Activated naive CD4-positive, alpha-beta T cell treated with anti-CD3 and anti-CD28 coated beads for 36 hours (primary cell): ENCODE measurements at regions of chr17 and their contacts with region 1.

Region 1: DNA sequence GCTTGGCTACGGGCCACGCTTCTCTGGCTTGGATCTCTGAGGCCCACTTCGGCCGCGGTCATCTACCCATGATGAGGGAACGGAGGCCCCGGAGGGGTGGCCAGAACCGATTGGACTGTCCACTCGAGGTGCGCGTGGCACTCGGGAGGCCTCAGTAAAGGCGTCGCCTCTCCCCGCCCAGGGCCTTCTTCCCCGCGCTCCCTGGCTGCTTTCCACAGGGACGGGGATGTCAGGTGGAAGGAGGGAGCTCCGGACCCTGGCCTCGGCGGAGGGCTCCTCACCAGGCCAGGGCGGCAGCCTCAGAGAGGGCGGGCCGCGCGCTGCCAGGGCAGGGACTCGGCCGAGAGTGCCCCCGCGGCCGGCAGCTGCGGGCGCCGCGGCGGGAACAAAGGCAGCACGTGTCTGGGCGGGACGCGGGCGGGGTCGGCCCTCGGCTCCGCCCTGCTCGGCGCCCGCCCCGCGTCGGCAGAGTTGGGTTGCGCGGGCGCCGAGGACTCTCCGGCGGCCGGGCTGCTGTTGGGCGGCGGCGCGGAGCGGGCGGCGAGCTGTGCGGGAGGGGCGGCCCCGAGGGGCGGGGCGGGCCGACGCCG is 587 bp upstream of the CDK5R1 start:
- DNase-seq: peak; percentile 70
- H3K4me3 Mint-ChIP-seq: peak overlapping the region; percentile 45
- H3K27ac Mint-ChIP-seq: no peak overlapping the region
- H3K4me1 Mint-ChIP-seq: peaks cover 47% of the 10 kb centered on the region
- H3K27me3 Mint-ChIP-seq: no peaks in the 10 kb centered on the region

Region 2: DNA sequence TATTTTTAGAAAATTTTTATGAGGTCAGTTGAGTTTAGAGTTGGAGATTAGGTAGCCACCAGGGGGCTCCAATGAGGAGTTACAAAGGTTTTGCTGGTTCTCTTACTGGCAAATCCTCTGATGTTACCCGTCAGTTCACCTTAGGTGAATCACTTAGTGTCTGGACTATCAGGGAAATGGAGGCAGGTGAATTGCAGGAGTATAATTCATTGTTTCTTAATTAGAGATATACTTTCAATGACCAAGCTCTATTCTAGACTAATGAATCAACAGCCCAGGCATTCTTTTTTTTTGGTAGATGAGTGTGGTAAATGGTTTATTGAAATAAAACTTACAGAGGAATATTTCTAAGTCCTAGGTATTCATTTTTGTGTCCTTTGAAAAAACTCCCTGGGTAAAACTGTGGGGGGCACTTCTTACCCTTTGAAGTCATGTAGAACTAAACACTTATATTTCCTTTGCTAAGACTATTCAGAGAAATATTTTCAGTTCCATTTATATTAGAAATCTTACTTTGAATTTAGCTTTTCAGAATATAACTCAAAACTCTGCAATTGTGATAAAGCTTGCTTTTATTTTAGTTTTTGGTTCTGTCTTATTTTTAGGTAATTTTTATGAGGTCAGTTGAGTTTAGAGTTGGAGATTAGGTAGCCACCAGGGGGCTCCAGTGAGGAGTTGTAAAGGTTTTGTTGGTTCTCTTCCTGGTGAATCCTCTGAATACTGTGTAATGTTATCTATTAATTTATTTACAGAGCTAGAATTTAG is 24.2 kb before region 1 on chr17:
- CTCF ChIA-PET with region 1: interaction called, 48 read pairs
- intact Hi-C with region 1: loop called (anchors 1 kb)
- DNase-seq: peak; percentile 83
- H3K4me3 Mint-ChIP-seq: no peak overlapping the region
- H3K27ac Mint-ChIP-seq: peak overlapping the region; percentile 72
- H3K4me1 Mint-ChIP-seq: peaks cover 37% of the 10 kb centered on the region
- H3K27me3 Mint-ChIP-seq: no peaks in the 10 kb centered on the region

Region 3: GRCh38 chr17:32609085-32609484 is 122.9 kb after region 1 on chr17:
- CTCF ChIA-PET with region 1: interaction called, 15 read pairs
- intact Hi-C with region 1: loop called (anchors 1 kb)
- DNase-seq: peak; percentile 89
- H3K4me3 Mint-ChIP-seq: no peak overlapping the region
- H3K27ac Mint-ChIP-seq: no peak overlapping the region
- H3K4me1 Mint-ChIP-seq: peaks cover 8% of the 10 kb centered on the region
- H3K27me3 Mint-ChIP-seq: no peaks in the 10 kb centered on the region

Region 4: DNA sequence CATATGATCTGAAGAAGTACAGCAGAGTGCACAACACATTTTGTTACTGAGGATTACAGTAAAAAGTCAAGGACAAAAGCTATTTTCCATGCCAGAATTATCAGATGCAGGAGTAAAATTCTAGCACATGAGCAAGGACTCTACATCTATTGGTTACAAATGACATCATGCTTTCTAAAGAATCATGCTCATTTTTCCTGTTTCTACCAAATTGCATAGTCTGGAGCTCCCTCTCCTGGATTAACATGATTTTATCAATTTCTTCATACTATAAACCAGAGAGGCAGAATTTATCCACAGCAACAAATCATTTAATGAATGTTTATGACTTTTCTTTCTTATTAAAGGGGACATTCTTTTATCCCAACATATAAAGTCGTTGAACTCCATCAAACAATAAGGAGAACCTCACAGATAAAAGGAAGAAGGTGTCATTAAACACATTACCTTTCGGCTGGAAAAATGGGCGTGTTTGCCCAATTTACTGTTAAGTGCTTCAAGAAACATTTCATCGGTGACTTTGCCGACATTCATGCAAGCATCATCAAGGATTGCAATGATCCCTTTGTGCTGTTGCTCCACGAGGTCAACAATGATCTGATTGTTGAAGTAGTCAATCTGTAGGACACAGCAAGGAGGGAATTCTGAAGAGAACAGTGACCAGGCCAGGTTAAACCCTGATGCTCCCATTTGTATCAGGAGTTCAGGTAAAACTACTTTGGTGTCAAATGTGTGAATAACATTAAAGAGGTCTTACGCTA is 269.0 kb after region 1 on chr17:
- CTCF ChIA-PET with region 1: interaction called, 12 read pairs
- intact Hi-C with region 1: loop called (anchors 1 kb)
- DNase-seq: no peak
- H3K4me3 Mint-ChIP-seq: no peak overlapping the region
- H3K27ac Mint-ChIP-seq: no peak overlapping the region
- H3K4me1 Mint-ChIP-seq: peaks cover 13% of the 10 kb centered on the region
- H3K27me3 Mint-ChIP-seq: no peaks in the 10 kb centered on the region

Region 5: GRCh38 chr17:32936894-32937500 is 450.8 kb after region 1 on chr17:
- CTCF ChIA-PET with region 1: no interaction called
- intact Hi-C with region 1: no loop called
- DNase-seq: peak; percentile 76
- H3K4me3 Mint-ChIP-seq: no peak overlapping the region
- H3K27ac Mint-ChIP-seq: no peak overlapping the region
- H3K4me1 Mint-ChIP-seq: no peaks in the 10 kb centered on the region
- H3K27me3 Mint-ChIP-seq: peaks cover 16% of the 10 kb centered on the region